Activated B cell treated with CpG ODN at 0.5 μM for 24 hours (primary cell): ENCODE measurements at regions of chr10 and their contacts with region 1.

Region 1: GRCh38 chr10:21556527-21556926 is 22.5 kb downstream of the MLLT10 start:
- DNase-seq: no peak
- ATAC-seq: no peak
- H3K4me3 Mint-ChIP-seq: no peak overlapping the region
- H3K27ac Mint-ChIP-seq: no peak overlapping the region
- H3K4me1 Mint-ChIP-seq: peaks cover 4% of the 10 kb centered on the region
- H3K27me3 Mint-ChIP-seq: no peaks in the 10 kb centered on the region
- CTCF ChIP-seq: no peak

Region 2: DNA sequence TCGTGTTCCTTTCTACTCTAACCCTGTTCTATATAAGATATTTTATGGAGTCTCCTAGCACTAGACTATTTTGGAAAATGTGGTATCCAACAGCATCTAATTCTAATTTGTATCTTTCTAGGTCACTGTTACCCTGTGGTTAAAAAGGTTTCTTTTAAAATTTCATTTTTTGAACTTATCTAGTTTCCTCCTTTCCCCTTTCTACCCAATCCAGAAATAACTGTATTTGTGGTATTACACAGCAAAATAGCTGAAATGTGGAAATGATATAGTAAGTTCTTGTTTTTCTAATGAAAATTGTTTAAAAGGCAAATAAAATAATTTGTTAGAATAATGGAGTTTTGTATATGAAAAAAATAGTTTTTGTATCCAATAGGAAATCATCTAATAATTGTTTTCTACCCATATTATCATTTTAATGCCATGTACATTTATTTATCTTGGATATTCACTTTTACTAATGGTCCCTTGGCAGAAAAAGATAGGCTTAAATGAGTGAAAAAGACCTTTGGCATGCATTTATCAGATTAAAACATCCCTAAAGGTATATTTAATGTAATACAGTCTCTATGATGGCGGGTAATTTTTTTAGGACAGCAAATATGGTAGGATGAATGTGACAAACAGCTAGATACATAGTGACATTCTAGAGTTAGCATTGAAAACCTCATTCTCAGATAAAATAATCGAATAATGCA is 1915.8 kb before region 1 on chr10:
- CTCF ChIA-PET with region 1: no interaction called
- POLR2A ChIA-PET with region 1: interaction called, 13 read pairs
- intact Hi-C with region 1: no loop called
- DNase-seq: no peak
- ATAC-seq: no peak
- H3K4me3 Mint-ChIP-seq: no peak overlapping the region
- H3K27ac Mint-ChIP-seq: no peak overlapping the region
- H3K4me1 Mint-ChIP-seq: peaks cover 5% of the 10 kb centered on the region
- H3K27me3 Mint-ChIP-seq: no peaks in the 10 kb centered on the region
- CTCF ChIP-seq: no peak